GM13977 (cell line): ENCODE measurements at regions of chr7 and their contacts with region 1.

Region 1: DNA sequence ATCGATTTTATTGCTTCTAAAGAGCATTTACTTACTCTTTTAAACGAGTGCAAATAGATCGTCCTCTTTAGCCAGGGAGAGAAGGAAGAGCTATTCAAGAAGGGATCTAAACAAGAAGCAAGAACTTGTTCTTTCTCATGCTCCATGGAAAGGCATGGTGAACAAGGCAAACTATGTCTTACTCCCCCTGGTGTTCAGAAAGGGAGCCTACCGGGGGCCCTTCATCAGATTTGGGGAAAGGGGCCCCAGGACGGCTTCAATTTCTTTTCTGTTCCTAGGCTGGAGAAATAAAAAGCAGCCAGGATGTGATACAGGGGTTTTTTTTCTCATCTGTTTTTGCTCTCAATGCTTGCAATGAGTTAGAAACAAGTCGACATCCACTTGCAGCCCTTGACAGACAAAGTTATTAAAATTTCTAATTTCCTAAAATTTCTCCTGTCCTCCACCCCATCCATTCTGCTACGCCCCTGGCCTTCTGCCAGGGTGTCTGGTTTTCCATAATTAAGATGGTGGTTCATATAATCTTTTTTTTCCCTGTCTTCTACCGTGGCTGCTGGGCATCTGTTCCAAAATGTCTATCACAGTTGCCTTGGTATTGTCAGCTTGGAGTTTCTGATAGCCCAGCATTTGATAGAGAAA is 214.4 kb downstream of the CREB5 start:
- DNase-seq: peak; percentile 14
- CTCF ChIP-seq: peak; percentile 61

Region 2: DNA sequence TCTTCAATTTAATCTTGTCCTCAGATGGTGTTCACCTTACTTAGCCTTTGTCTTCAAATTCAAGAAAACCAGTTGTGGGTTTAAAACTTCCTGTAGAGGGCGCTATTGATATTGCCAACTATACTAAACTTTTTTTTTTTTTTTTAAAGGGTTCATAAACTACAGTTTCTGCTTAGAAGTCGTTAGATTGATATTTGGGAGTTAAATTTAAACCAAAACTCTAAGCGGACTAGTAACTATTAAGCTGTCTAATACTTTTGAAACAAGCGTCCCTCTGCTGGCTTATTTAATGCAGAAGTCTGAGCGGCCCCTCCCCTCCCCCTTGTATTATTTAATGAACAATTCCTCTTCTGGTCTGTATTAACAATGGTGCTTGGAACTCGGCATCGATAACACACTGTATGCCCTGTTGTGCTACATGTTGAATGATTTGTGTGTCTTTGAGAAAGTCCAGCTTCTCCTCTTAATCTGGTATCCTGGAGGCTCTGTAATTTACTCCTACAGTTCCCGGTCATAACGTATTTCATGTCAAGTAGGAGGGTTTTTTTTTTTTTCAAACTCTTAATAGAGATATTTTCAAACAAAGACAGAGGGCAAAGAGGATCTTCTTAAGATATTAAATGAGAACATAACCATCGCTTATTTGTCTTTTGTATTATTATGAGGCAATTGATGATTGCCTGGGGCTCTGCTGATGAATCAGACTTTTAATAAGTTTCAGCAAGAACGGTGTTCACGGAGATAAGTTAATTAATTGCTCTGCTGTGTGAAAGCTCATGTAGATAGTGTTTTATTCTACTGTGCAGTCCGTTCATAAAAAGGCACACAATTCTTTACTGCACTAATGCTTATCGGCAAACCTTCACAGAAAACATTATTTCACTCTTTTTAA is 237.0 kb before region 1 on chr7:
- in situ Hi-C with region 1: loop called (anchors 10 kb)
- DNase-seq: no peak
- CTCF ChIP-seq: peak; percentile 43

Region 3: DNA sequence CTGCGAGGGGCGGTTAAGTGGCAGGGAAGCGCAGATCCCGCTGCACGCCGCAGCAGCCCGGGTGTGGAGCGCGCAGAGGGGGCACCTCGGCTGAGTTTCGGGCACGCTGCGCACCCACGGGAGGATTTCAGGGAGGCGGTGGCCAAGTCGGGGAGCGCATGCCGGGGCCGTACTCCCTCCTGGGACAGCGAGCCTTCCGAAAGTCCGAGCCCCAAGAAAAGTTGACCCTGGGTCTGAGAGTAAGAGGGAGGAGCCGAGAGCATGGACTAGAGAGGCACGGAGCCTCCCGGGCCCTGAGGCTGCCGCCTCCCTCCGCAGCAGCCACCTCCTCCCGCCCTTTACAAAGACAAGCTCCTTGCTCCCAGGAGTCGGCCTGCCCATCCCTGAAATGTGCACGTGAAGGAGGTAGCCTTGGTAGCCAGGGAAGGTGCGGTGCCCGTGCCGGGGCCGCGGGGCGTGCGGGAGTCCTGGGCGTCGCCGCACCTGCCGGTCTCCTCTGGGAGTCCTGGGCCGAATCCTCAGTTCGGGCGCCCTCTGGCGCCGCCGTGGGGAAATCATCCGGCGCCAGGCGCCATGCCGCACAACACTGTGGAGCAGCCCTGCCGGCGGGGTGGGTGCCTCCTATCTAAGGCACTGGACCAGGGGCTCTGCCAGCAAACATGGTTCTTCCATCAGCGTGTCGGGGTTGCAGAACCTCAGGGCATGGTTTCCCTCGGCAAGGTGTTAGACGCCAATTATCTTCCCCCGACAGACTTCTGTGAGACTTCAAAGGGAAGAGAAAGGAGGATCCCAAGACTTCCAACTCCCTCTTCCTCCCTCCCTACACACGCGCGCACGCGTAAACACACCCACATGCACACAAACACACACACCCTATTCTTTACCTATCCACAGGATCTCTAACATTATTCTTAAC is 227.3 kb after region 1 on chr7:
- in situ Hi-C with region 1: loop called (anchors 10 kb)
- DNase-seq: peak; percentile 91
- CTCF ChIP-seq: peak; percentile 94